OCI-LY7 (cell line): ENCODE measurements at regions of chr1 and their contacts with region 1.

Region 1: GRCh38 chr1:66711420-66711819 is 40.8 kb upstream of the DYNLT5 start:
- DNase-seq: no peak
- H3K4me3 ChIP-seq: no peak overlapping the region
- H3K27ac ChIP-seq: no peak overlapping the region
- H3K4me1 ChIP-seq: no peaks in the 10 kb centered on the region
- CTCF ChIP-seq: peak; percentile 46; the same call in 1 of the 2 replicates

Region 2: GRCh38 chr1:66758241-66758755 is 46.9 kb after region 1 on chr1:
- CTCF ChIA-PET with region 1: no interaction called
- POLR2A ChIA-PET with region 1: no interaction called
- intact Hi-C with region 1: no loop called
- DNase-seq: peak; percentile 87
- H3K4me3 ChIP-seq: peak overlapping the region; percentile 45
- H3K27ac ChIP-seq: peak overlapping the region; percentile 83
- H3K4me1 ChIP-seq: peaks cover 38% of the 10 kb centered on the region
- CTCF ChIP-seq: no peak

Region 3: DNA sequence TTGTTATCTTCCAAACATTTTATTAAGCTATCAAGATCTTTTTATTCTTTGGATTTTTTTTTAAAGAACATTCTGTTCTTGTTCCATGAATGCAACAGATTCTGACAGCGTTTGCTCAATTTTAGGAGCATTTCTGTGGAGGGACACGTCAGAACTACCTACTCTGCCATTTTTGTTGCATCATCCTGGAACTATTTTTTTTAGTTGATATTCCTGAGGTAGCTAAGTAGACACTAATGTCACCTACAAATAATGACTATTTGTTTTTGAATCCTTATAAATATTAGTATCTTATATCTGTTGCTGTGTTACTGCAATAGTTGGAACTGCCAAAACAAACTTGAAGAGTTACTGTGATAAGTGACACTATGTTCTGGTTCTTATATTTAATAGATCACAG is 156.1 kb after region 1 on chr1:
- CTCF ChIA-PET with region 1: no interaction called
- POLR2A ChIA-PET with region 1: no interaction called
- intact Hi-C with region 1: no loop called
- DNase-seq: no peak
- H3K4me3 ChIP-seq: no peak overlapping the region
- H3K27ac ChIP-seq: no peak overlapping the region
- H3K4me1 ChIP-seq: no peaks in the 10 kb centered on the region
- CTCF ChIP-seq: no peak

Region 4: DNA sequence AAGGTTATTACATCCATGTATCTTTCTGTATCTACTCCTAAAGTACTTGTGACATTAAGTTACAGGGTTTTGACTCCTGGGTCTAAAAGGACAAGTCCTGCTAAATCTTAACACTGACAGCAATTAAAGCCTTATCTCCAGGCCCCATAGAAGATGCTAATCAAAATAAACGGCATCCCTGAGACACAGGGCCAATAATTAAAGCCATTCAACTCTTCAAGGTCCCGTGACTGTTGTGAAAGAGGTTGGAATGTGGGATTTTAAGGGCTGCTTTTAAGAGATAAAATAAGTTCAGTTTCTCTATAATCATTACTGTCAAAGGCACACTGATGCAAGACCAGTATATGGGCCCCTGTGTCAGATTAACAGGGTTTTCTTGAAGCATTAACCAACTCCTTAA is 204.9 kb after region 1 on chr1:
- CTCF ChIA-PET with region 1: no interaction called
- POLR2A ChIA-PET with region 1: no interaction called
- intact Hi-C with region 1: no loop called
- DNase-seq: no peak
- H3K4me3 ChIP-seq: no peak overlapping the region
- H3K27ac ChIP-seq: no peak overlapping the region
- H3K4me1 ChIP-seq: no peaks in the 10 kb centered on the region
- CTCF ChIP-seq: no peak

Region 5: DNA sequence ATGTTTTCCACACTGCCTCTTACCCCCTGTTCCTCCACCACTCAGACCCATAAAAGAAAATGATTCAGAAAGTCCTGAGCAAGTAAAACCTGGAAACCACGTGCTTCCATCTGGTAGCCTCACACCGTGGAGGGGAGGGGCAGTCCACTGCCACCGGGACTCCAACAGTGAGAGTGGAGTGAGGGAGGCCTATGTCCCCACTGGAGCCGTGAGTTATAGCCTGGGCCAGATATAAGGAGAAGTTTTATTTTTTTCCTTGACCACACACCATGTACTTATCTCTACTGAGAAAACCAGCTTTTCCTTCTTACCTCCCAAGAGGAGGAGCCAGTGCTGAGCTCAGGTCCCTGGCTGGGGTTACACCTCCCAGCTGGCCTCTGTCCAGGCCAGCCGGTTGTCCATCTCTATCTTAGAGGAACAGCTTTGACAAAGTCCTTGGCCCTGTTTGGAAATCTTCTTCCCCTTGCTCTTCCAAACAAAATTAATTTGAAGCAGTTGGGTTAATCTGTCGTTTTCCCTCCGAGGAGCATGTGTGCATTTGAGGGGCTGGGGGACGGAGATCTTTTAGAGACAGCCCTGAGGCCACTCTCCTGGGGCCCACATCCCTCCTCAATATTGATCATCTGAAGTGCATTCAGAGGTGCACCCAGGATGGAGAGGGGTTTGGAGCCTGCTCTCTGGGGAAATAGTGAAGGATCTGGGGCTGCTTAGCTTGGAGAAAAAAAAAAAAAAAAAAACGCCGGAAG is 767.9 kb after region 1 on chr1:
- CTCF ChIA-PET with region 1: no interaction called
- POLR2A ChIA-PET with region 1: interaction called, 12 read pairs
- intact Hi-C with region 1: no loop called
- DNase-seq: no peak
- H3K4me3 ChIP-seq: no peak overlapping the region
- H3K27ac ChIP-seq: no peak overlapping the region
- H3K4me1 ChIP-seq: no peaks in the 10 kb centered on the region
- CTCF ChIP-seq: no peak

Region 6: GRCh38 chr1:67561704-67562113 is 850.3 kb after region 1 on chr1:
- CTCF ChIA-PET with region 1: interaction called, 13 read pairs
- POLR2A ChIA-PET with region 1: no interaction called
- intact Hi-C with region 1: no loop called
- DNase-seq: peak; percentile 84
- H3K4me3 ChIP-seq: no peak overlapping the region
- H3K27ac ChIP-seq: no peak overlapping the region
- H3K4me1 ChIP-seq: peaks cover 4% of the 10 kb centered on the region
- CTCF ChIP-seq: peak; percentile 98